Activated CD4-positive, alpha-beta T cell treated with anti-CD3 and anti-CD28 coated beads, Interleukin-2, amount 10 ng/mL, durations not matched to agents 7 days and 5 days (primary cell): ENCODE measurements at regions of chr2 and their contacts with region 1.

Region 1: DNA sequence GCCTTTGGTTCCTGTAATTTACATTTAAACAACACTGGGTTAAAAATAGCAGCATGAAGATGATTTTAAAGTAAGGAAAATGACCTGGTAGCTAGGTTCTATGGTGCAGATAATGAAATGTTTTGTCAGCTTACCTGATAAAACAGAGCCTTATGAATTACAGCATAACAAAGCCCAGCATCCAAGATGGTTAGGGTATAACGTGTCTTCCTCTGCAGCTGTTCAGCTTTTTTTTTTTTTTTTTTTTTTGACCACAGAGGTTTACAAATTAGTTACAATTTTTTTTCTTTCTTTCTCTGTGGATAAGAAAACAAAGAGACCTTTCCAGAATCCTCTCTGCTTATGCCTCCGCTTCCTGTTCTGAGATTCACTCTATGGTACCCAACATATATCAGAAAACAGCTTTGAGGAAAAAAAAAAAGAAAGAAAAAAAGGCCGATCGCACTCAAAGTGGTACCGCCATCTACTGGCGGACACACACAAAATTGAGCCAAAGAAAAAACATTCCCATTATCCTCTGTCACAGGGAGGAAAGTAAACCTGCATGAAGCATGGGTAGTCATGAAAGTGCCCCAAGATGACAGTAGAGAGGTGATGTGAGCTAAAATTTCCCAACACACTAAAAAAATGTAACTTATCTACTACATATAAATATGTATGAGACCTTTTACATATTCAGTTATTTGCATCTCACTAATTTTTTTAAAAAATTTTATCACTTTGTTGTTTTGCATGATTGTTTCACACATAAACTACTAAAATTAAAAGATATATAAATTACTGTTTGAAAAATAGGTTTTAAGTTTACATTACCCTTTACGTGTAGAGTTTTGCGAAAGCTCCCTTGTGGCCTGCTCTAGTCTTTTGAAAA is at the start of gene SCN3A:
- DNase-seq: no peak
- H3K4me3 Mint-ChIP-seq: no peak within 1 kb of the TSS
- H3K27ac Mint-ChIP-seq: no peak within 1 kb of the TSS
- H3K4me1 Mint-ChIP-seq: peaks cover 3% of the 10 kb centered on the region
- H3K27me3 Mint-ChIP-seq: peaks cover 5% of the 10 kb centered on the region
- total RNA-seq, gene SCN3A: not detected

Region 2: DNA sequence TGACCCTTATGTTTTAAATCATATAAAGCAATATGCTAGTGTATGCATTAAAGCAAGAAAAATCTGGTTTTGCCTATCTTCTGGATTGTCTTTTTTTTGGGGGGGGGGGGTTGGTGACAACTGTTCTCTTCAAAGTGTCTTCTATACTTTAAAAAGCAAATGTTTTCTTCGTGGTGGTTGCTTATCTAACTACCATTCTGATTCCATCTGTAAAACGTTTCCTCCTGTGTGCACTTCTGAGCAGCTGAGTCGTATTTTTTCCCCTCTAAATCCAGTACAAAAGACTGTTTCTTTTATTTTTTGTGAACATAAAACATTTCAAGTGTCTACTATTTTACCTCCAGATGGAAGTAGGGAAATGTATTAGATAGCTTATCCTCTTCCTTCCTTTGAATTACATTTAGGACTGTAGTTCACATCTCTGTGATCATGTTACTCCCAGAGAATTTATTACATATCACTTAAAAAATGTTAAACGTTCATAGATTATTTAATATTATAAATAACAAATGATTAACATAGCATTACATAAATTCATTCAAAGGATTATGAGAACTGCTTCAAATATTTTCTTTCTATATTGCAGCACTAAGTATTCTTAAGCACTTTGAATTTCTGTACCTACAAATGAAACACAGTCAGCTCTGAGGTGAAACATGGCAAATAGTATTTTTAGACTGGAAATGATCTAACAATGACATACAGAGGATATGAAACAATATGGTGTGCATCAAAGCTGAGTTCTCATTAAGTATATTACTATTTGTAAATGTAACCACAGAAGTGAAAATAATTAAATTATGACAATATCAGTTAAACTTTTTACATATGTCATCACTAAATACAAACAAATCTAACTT is 56.5 kb before region 1 on chr2:
- CTCF ChIA-PET with region 1: no interaction called
- POLR2A ChIA-PET with region 1: interaction called, 11 read pairs
- DNase-seq: no peak
- H3K4me3 Mint-ChIP-seq: no peak overlapping the region
- H3K27ac Mint-ChIP-seq: no peak overlapping the region
- H3K4me1 Mint-ChIP-seq: no peaks in the 10 kb centered on the region
- H3K27me3 Mint-ChIP-seq: no peaks in the 10 kb centered on the region

Region 3: GRCh38 chr2:165193178-165193777 is 10.6 kb before region 1 on chr2:
- CTCF ChIA-PET with region 1: no interaction called
- POLR2A ChIA-PET with region 1: no interaction called
- DNase-seq: no peak
- H3K4me3 Mint-ChIP-seq: no peak overlapping the region
- H3K27ac Mint-ChIP-seq: no peak overlapping the region
- H3K4me1 Mint-ChIP-seq: no peaks in the 10 kb centered on the region
- H3K27me3 Mint-ChIP-seq: peaks cover 3% of the 10 kb centered on the region